H1 (cell line): ENCODE measurements at regions of chr4 and their contacts with region 1.

Region 1: DNA sequence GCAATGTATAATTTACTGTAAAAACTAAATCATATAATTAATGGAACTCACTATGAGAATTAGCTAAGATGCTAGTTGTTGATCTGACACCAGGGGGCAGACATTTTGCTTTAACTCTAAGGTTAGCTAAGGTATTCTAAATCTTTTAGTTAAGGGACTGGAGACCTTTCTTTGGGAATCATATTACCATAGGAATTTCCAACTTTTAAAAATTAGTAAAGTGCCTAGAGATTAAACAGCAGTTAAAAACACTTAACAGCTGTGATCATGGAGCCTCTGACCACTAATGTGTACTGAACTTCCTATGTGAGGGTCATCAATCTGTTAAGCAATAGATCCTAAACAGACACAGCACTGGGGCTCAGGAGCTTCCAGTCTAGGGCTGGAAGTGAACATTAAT is 226.6 kb downstream of the NSUN7 start:
- DNase-seq: no peak
- H3K4me3 ChIP-seq: no peak overlapping the region
- H3K27ac ChIP-seq: no peak overlapping the region
- H3K4me1 ChIP-seq: no peaks in the 10 kb centered on the region
- H3K27me3 ChIP-seq: no peaks in the 10 kb centered on the region
- CTCF ChIP-seq: peak in 2 of 3 experiments; percentile 16 to 59; a peak in 2 of 4 replicates
- EP300 ChIP-seq: no peak
- POLR2A ChIP-seq: no peak
- RAD21 ChIP-seq: peak; percentile 43 to 59

Region 2: GRCh38 chr4:40908702-40909362 is 67.5 kb before region 1 on chr4:
- CTCF ChIA-PET with region 1: interaction called, 11 read pairs
- POLR2A ChIA-PET with region 1: no interaction called
- DNase-seq: peak; percentile 69 to 88
- H3K4me3 ChIP-seq: no peak overlapping the region
- H3K27ac ChIP-seq: no peak overlapping the region
- H3K4me1 ChIP-seq: peaks cover 0 to 7% (median 4%) of the 10 kb centered on the region in 4 experiments; a peak in 5 of 7 replicates
- H3K27me3 ChIP-seq: no peaks in the 10 kb centered on the region
- CTCF ChIP-seq: peak; percentile 98 to 100 (median 99)
- EP300 ChIP-seq: no peak
- POLR2A ChIP-seq: no peak
- RAD21 ChIP-seq: peak; percentile 87 to 90

Region 3: DNA sequence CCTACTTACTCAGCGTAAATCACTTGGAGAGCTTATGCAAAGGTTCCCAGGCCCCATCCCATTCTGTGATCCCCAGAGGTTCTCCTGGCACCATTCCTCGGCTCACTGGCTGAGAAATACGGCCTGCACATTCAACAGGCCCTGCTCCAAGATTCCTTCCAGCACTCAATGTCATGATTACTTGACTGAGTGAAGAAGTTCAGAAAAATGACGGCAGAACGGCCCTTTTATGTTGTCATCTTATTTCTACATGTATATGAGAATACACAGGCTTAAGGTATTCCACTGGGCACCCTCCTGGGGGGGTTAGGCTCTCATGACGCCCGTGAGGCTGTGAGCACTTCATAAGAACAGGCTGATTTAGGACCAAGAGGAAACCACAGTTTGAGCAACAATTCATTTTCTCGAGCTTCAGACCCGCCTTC is 36.0 kb before region 1 on chr4:
- CTCF ChIA-PET with region 1: interaction called, 19 read pairs
- POLR2A ChIA-PET with region 1: no interaction called
- DNase-seq: no peak
- H3K4me3 ChIP-seq: no peak overlapping the region
- H3K27ac ChIP-seq: no peak overlapping the region
- H3K4me1 ChIP-seq: peaks cover 0 to 7% (median 5%) of the 10 kb centered on the region in 4 experiments; a peak in 3 of 7 replicates
- H3K27me3 ChIP-seq: no peaks in the 10 kb centered on the region
- CTCF ChIP-seq: no peak
- EP300 ChIP-seq: no peak
- POLR2A ChIP-seq: no peak
- RAD21 ChIP-seq: no peak

Region 4: DNA sequence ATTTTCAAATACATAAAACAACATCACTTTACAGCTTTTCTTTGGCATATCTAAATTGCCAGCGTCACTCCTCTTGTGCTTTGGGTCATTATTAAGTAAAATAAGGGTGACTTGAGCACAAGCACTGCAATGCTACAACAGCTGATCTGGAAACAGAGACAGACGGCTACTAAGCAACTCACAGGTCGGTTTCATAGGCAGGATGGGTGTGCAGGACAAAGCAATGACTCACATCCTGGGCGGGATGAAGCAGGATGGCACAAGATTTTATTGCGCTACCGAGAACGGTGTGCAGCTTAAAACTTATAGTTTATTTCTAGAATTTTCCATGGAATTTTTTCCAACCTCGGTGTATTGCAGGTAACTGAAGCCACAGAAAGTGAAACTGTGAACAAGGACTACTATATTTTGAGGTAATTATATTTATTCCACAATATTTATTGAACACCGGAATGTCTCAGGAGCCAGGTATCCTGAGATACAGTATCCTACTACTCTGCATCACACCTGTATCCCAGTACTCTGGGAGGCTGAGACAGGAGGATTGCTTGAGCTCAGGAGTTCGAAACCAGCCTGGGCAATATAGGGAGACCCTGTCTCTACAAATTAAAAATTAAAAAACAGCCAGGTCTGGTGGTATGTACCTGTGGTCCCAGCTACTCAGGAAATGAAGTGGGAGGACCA is 22.5 kb after region 1 on chr4:
- CTCF ChIA-PET with region 1: interaction called, 58 read pairs
- POLR2A ChIA-PET with region 1: no interaction called
- DNase-seq: no peak
- H3K4me3 ChIP-seq: no peak overlapping the region
- H3K27ac ChIP-seq: no peak overlapping the region
- H3K4me1 ChIP-seq: peaks cover 3 to 4% (median 3%) of the 10 kb centered on the region in 4 experiments; a peak in 4 of 7 replicates
- H3K27me3 ChIP-seq: no peaks in the 10 kb centered on the region
- CTCF ChIP-seq: no peak
- EP300 ChIP-seq: no peak
- POLR2A ChIP-seq: no peak
- RAD21 ChIP-seq: no peak

Region 5: DNA sequence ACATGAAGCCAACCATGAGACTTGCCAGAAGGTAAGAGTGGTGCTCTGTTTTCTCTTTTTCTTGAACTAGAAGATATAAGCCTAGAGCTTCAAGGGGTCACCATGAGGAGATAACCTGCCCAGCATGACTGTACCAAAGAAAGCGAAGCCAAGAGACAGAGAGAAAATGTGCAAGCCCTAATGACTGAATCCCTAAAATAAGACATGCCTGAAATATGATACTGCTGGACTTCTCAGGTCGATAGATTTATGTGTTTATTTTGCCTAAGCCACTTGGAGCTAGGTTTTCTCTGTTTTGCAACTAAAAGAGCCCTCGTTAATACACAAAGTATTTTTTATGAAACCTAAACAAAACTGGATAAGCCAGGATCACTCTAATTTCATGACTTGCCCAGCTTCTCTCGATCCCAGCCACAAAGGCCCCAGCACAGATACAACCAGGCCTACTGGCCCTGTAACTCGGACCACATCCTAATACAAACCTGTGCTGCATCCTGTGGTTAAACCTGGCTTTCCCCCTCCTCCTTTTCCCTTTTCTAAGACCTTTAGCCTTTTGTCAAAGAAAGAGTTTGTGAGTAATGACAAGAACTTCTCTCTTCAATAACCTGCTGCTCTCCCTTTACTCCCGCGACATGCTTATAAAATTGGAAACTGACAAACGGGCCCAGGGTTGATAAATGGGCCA is 52.2 kb after region 1 on chr4:
- CTCF ChIA-PET with region 1: no interaction called
- POLR2A ChIA-PET with region 1: no interaction called
- DNase-seq: no peak
- H3K4me3 ChIP-seq: no peak overlapping the region
- H3K27ac ChIP-seq: no peak overlapping the region
- H3K4me1 ChIP-seq: no peaks in the 10 kb centered on the region
- H3K27me3 ChIP-seq: no peaks in the 10 kb centered on the region
- CTCF ChIP-seq: no peak
- EP300 ChIP-seq: no peak
- POLR2A ChIP-seq: no peak
- RAD21 ChIP-seq: no peak

Region 6: GRCh38 chr4:41204400-41204978 is 228.1 kb after region 1 on chr4:
- CTCF ChIA-PET with region 1: interaction called, 167 read pairs
- POLR2A ChIA-PET with region 1: interaction called, 3 read pairs
- DNase-seq: no peak
- H3K4me3 ChIP-seq: no peak overlapping the region
- H3K27ac ChIP-seq: no peak overlapping the region
- H3K4me1 ChIP-seq: peaks cover 0 to 5% (median 0%) of the 10 kb centered on the region in 4 experiments; a peak in 2 of 7 replicates
- H3K27me3 ChIP-seq: no peaks in the 10 kb centered on the region
- CTCF ChIP-seq: no peak
- EP300 ChIP-seq: no peak
- POLR2A ChIP-seq: no peak
- RAD21 ChIP-seq: no peak

Region 7: GRCh38 chr4:41257257-41257901 is 281.0 kb after region 1 on chr4:
- CTCF ChIA-PET with region 1: interaction called, 7 read pairs
- POLR2A ChIA-PET with region 1: interaction called, 10 read pairs
- DNase-seq: peak in 1 of 2 experiments; percentile 73
- H3K4me3 ChIP-seq: peak overlapping the region; percentile 87 to 97 (median 92)
- H3K27ac ChIP-seq: peak overlapping the region; percentile 89; the same call in 1 of the 2 replicates
- H3K4me1 ChIP-seq: peaks cover 2 to 8% (median 4%) of the 10 kb centered on the region in 4 experiments; a peak in 6 of 7 replicates
- H3K27me3 ChIP-seq: no peaks in the 10 kb centered on the region
- CTCF ChIP-seq: no peak
- EP300 ChIP-seq: no peak
- POLR2A ChIP-seq: peak; percentile 42 to 49; a peak in 1 of 3 replicates
- RAD21 ChIP-seq: no peak